CD4-positive, alpha-beta T cell (primary cell): ENCODE measurements at regions of chr1 and their contacts with region 1.

Region 1: GRCh38 chr1:79749607-79750006 is 743.1 kb upstream of the ADGRL4 start:
- DNase-seq: no peak
- ATAC-seq: no peak
- H3K4me3 ChIP-seq: no peak overlapping the region
- H3K4me3 Mint-ChIP-seq: no peak overlapping the region
- H3K27ac ChIP-seq: no peak overlapping the region
- H3K27ac Mint-ChIP-seq: no peak overlapping the region
- H3K4me1 ChIP-seq: no peaks in the 10 kb centered on the region
- H3K4me1 Mint-ChIP-seq: no peaks in the 10 kb centered on the region
- H3K27me3 ChIP-seq: no peaks in the 10 kb centered on the region
- H3K27me3 Mint-ChIP-seq: no peaks in the 10 kb centered on the region
- CTCF ChIP-seq: no peak

Region 2: DNA sequence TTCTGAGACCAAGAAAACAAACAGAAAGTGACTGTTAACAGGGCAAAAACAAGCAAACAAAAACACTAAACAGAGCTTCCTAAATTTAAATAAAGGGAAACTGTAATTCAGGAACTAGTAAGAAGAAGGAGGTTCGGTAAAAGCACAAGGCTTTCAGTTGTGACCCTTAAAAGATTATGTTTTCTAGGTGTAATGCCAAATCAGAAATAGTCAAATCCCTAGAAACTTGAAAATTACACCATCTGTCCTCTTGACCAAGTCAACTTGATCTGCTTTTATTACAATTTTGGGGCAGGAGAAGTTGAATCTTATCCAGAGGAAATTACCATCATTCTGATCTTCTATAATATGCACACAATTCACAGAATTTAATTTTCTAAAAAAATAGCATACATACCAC is 10.9 kb after region 1 on chr1:
- CTCF ChIA-PET with region 1: no interaction called
- POLR2A ChIA-PET with region 1: no interaction called
- intact Hi-C with region 1: loop called in 1 of 2 experiments (anchors 1 kb)
- DNase-seq: no peak
- ATAC-seq: no peak
- H3K4me3 ChIP-seq: no peak overlapping the region
- H3K4me3 Mint-ChIP-seq: no peak overlapping the region
- H3K27ac ChIP-seq: no peak overlapping the region
- H3K27ac Mint-ChIP-seq: no peak overlapping the region
- H3K4me1 ChIP-seq: no peaks in the 10 kb centered on the region
- H3K4me1 Mint-ChIP-seq: no peaks in the 10 kb centered on the region
- H3K27me3 ChIP-seq: no peaks in the 10 kb centered on the region
- H3K27me3 Mint-ChIP-seq: no peaks in the 10 kb centered on the region
- CTCF ChIP-seq: no peak

Region 3: GRCh38 chr1:79827446-79827845 is 77.8 kb after region 1 on chr1:
- CTCF ChIA-PET with region 1: no interaction called
- POLR2A ChIA-PET with region 1: no interaction called
- intact Hi-C with region 1: no loop called
- DNase-seq: no peak
- ATAC-seq: no peak
- H3K4me3 ChIP-seq: no peak overlapping the region
- H3K4me3 Mint-ChIP-seq: no peak overlapping the region
- H3K27ac ChIP-seq: no peak overlapping the region
- H3K27ac Mint-ChIP-seq: no peak overlapping the region
- H3K4me1 ChIP-seq: no peaks in the 10 kb centered on the region
- H3K4me1 Mint-ChIP-seq: no peaks in the 10 kb centered on the region
- H3K27me3 ChIP-seq: no peaks in the 10 kb centered on the region
- H3K27me3 Mint-ChIP-seq: no peaks in the 10 kb centered on the region
- CTCF ChIP-seq: no peak